Adrenal gland (tissue), 19 donors: ENCODE measurements at regions of chr9 and their contacts with region 1.

Region 1: DNA sequence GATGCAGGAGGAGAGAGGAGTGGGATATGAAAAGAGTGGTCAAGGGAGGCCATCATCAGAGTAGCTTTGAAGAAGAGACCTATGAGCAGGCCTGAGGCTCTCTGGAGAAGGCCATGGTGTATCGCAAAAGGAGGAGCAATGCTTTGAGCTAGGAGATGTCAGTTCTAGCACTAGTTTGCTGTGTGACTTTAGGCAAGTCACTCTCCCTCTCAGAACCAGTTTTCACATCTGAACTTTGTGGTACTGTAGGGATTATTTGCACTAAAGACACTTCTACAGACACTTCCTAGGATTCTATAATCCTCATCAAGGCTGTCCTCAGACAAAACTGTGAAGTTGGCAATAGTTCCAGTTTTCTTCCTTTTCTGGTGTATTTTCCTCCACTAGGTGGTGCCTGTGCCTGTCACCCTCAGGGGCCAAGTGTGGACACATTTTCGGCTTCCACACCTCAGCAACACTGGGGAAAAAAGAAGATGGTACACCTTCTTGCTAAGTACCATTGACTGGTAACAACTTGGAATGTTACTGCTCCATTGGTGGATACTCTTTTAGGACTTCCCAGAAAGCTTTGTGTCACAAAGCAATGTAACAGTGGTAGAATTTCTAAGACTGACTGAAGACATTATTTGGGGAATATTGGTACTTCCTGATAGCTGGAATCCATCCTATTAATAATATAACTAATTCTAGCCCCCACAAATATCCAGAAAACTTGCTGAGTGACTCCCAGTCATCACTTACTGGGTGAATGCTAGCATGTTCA is 9.9 kb downstream of the PAPPA start:
- DNase-seq: no peak
- H3K4me3 ChIP-seq: no peak overlapping the region
- H3K27ac ChIP-seq: no peak overlapping the region
- H3K4me1 ChIP-seq: no peaks in the 10 kb centered on the region
- H3K27me3 ChIP-seq: no peaks in the 10 kb centered on the region
- CTCF ChIP-seq: peak in 4 of 6 experiments; percentile 9 to 39 (median 36)
- POLR2A ChIP-seq: no peak

Region 2: GRCh38 chr9:116149844-116150243 is 13.6 kb before region 1 on chr9:
- intact Hi-C with region 1: no loop called
- DNase-seq: peak in 4 of 7 donors; percentile 22 to 57 (median 27)
- H3K4me3 ChIP-seq: no peak overlapping the region
- H3K27ac ChIP-seq: no peak overlapping the region
- H3K4me1 ChIP-seq: peaks cover 4 to 6% of the 10 kb centered on the region in 2 donors
- H3K27me3 ChIP-seq: peaks cover 4% of the 10 kb centered on the region
- CTCF ChIP-seq: peak; percentile 26 to 56 (median 48)
- POLR2A ChIP-seq: no peak

Region 3: GRCh38 chr9:116566677-116567488 is 403.4 kb after region 1 on chr9:
- intact Hi-C with region 1: loop called (anchors 5 to 10 kb)
- DNase-seq: no peak
- H3K4me3 ChIP-seq: no peak overlapping the region
- H3K27ac ChIP-seq: peak overlapping the region in 1 of 5 donors; percentile 36
- H3K4me1 ChIP-seq: peaks cover 0 to 11% of the 10 kb centered on the region in 2 donors
- H3K27me3 ChIP-seq: no peaks in the 10 kb centered on the region
- CTCF ChIP-seq: no peak
- POLR2A ChIP-seq: no peak